AG04449 (cell line): ENCODE measurements at regions of chr7 and their contacts with region 1.

Region 1: GRCh38 chr7:131654668-131655326 is 98.4 kb upstream of the PODXL start:
- DNase-seq: peak; percentile 1
- H3K4me3 ChIP-seq: no peak overlapping the region
- CTCF ChIP-seq: peak; percentile 99

Region 2: DNA sequence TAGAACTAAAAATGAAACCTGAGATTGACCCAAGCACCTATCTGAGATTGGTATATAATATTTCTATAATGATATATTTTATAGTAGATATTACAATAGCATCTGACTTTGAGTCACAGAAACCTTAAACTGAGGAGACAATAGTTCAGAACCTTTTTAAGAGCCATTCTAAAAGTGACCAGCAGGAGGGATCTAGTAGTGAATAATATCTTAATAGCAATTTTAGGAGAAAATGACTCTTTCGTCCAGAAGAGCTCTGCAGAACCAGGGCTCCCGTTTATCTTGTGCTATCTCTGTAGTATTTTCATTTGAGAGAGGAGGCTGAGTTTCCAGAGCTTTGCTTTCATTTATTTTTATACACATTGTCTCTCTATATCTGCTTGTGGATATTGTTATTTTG is 166.4 kb before region 1 on chr7:
- CTCF ChIA-PET with region 1: interaction called, 10 read pairs
- POLR2A ChIA-PET with region 1: no interaction called
- DNase-seq: no peak
- H3K4me3 ChIP-seq: no peak overlapping the region
- CTCF ChIP-seq: no peak

Region 3: GRCh38 chr7:131538071-131538790 is 116.6 kb before region 1 on chr7:
- CTCF ChIA-PET with region 1: interaction called, 77 read pairs
- POLR2A ChIA-PET with region 1: no interaction called
- DNase-seq: no peak
- H3K4me3 ChIP-seq: no peak overlapping the region
- CTCF ChIP-seq: no peak

Region 4: DNA sequence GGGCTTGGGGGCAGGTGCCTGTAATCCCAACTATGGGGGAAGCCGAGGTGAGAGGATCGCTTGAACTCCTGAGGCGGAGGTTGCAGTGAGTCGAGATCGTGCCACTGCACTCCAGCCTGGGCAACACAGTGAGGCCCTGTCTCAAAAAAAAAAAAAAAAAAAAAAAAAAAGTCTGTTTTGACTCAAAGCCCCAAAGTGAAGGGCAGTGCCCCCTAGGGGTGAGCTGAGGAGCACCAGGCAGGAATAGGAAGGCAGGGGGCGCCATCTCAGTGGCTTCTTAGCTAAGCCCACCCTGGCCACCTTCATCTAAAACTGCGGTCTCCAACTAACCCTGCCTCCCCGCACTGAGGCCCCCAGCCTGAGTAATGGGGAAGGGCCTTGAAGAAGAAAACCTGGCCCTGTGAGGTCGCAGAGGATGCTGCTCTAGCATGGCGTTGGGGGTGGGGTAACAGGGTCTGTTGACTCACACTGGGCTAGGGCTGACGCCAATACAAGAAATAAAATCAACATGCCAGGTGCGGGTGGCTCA is 108.2 kb before region 1 on chr7:
- CTCF ChIA-PET with region 1: interaction called, 77 read pairs
- POLR2A ChIA-PET with region 1: no interaction called
- DNase-seq: no peak
- H3K4me3 ChIP-seq: no peak overlapping the region
- CTCF ChIP-seq: peak; percentile 69

Region 5: DNA sequence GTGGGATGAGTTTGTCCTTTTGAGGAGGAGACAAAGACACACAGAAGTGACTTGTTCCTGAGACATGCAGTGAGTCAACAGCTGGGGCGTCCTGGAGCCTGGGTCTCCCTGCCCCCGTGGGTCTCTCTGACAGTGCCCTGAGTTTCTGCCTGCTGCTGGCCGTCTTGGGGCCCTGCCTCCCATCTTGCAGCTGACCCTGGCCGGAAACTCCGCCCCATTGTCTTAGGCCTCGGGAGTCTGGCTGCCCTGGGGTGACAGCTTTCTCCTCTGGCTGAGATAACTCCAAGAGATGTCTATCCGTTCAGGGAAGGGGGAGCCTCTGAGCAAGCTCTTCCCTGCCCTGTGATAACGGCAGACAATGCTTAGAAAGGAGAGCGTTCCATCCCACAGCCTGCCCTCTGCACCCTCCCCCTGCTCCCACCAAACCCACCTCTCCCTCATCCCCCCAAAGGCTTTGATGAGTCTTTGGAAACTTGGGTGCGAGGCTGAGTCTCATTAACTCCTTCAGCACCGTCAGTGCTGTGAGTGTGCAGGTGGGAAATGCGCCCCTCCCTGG is 28.9 kb before region 1 on chr7:
- CTCF ChIA-PET with region 1: interaction called, 18 read pairs
- POLR2A ChIA-PET with region 1: no interaction called
- DNase-seq: peak; percentile 38
- H3K4me3 ChIP-seq: no peak overlapping the region
- CTCF ChIP-seq: no peak

Region 6: GRCh38 chr7:131636092-131636491 is 18.7 kb before region 1 on chr7:
- CTCF ChIA-PET with region 1: interaction called, 11 read pairs
- POLR2A ChIA-PET with region 1: no interaction called
- DNase-seq: no peak
- H3K4me3 ChIP-seq: no peak overlapping the region
- CTCF ChIP-seq: no peak

Region 7: DNA sequence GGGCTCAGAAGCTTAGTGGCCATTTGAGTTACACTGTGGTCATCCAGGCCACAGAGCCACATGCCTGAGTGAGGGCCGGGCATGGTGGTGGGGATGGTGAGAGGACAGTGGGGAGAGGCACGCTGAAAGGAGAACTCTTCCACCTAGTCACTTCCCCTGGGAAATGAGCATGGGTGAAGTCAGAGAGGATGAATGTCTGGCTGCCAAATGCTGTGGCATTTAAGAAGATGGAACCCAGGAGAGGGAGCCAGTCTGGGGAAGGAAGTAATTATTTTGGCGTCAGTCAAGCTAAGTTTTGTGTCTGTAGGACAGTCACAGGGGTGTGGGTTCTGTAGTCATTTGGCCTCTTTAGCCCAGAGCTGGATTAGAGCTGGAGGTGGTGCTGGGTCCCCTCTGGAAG is 12.4 kb before region 1 on chr7:
- CTCF ChIA-PET with region 1: interaction called, 22 read pairs
- POLR2A ChIA-PET with region 1: no interaction called
- DNase-seq: no peak
- H3K4me3 ChIP-seq: no peak overlapping the region
- CTCF ChIP-seq: no peak